ENCODE measurements at regions of chr12 and their contacts with region 1.

Region 1: DNA sequence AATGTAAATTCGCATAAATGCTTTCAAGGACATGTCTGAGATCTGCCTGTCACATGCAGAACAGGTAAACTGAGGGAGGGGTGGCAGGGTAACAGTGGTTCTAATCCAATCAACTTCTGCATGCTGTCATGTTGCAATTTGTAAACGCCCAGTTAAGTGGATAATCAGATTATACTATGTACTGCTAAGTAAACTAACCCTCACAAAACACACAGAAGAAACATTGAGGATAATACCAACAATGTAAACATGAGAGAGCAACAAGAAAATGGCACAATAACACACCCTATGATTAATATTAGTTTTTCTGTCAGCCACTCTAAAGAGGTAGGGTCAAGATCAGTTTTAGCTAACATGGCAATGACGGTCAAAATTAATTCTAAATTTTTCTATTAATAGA is 123.7 kb downstream of the KIF21A start:
- DNase-seq: no peak
- ATAC-seq: no peak
- H3K4me3 ChIP-seq: no peak overlapping the region
- H3K27ac ChIP-seq: no peak overlapping the region
- H3K4me1 ChIP-seq: no peaks in the 10 kb centered on the region
- H3K27me3 ChIP-seq: no peaks in the 10 kb centered on the region

Region 2: DNA sequence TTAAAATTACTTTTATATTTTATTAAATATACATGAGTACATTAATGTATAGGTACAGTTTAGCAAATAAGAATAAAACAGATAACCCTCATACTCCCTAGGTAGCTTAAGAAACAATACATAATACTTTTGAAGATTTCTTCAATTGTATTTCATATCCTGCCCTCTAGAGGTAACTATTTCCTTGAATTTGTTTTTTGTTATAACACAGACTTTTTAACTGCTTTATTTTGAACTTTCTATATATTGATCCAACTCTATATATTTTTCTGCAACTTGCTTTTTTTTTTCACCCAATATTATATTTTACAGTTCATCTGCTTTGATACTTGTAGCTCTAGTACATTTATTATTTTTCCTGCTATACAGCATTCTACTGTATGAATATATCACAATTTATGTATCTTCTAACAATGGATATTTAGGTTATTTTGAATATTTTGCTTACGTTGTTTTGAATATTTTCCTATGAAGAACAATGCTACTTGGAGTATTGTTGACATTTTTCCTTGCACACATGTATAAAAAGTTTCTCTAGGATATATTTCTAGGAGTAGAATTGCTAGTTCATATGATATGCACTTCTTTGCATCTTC is 373.2 kb after region 1 on chr12:
- intact Hi-C with region 1: loop called in 1 of 2 experiments (anchors 10 kb)
- DNase-seq: no peak
- ATAC-seq: no peak
- H3K4me3 ChIP-seq: no peak overlapping the region
- H3K27ac ChIP-seq: no peak overlapping the region
- H3K4me1 ChIP-seq: no peaks in the 10 kb centered on the region
- H3K27me3 ChIP-seq: no peaks in the 10 kb centered on the region